ENCODE measurements at regions of chr3 and their contacts with region 1.

Region 1: DNA sequence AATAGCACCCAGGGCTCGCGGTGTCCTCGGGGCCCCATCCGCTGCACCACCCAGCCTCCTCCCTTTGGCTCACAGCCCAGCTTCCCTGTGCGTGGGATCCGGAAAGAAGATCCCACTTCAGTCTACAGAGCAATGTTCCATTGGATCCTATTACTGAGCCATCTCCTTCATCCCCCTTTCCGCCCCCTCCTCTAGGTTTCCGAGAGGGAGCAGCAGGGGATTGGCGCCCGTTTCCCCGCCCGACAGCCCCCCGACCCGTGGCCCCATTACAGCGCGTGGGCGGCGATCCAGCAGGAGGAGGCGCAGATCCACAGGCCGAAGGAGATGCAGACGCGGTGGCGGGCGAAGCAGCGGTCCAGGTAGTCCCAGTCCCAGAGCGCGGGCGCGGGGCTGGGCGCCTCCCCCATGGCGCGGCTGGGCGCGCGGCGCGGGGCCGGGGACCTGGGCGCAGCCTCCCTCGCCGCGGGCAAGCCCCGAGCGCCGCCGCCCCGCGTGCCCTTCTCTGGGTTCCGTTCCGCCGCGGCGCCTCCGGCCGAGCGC is 340 bp downstream of the TMEM44 start:
- DNase-seq: no peak
- H3K4me3 ChIP-seq: peak overlapping the region; percentile 68
- H3K27ac ChIP-seq: peak overlapping the region; percentile 52
- H3K27me3 ChIP-seq: no peaks in the 10 kb centered on the region
- CTCF ChIP-seq: no peak

Region 2: DNA sequence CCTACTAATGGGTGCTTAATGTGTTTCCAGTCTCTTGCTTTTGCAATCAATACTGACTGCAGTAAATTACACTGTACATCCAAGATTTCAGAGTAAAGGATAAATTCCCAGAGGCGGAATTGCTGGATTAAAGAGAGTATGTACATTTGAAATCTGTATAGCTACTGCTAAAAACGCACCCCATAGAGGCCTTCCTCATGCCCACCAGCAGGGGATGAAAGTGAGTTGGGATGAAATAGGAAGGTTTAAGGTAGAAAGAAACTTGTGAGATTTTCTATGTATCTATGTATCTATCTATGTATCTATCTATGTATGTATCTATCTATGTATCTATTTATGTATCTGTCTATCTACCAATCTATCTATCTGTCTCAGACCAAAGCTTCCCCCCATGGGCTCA is 28.0 kb before region 1 on chr3:
- CTCF ChIA-PET with region 1: interaction called, 10 read pairs
- POLR2A ChIA-PET with region 1: no interaction called
- DNase-seq: no peak
- H3K4me3 ChIP-seq: no peak overlapping the region
- H3K27ac ChIP-seq: no peak overlapping the region
- H3K27me3 ChIP-seq: no peaks in the 10 kb centered on the region
- CTCF ChIP-seq: peak; percentile 48

Region 3: DNA sequence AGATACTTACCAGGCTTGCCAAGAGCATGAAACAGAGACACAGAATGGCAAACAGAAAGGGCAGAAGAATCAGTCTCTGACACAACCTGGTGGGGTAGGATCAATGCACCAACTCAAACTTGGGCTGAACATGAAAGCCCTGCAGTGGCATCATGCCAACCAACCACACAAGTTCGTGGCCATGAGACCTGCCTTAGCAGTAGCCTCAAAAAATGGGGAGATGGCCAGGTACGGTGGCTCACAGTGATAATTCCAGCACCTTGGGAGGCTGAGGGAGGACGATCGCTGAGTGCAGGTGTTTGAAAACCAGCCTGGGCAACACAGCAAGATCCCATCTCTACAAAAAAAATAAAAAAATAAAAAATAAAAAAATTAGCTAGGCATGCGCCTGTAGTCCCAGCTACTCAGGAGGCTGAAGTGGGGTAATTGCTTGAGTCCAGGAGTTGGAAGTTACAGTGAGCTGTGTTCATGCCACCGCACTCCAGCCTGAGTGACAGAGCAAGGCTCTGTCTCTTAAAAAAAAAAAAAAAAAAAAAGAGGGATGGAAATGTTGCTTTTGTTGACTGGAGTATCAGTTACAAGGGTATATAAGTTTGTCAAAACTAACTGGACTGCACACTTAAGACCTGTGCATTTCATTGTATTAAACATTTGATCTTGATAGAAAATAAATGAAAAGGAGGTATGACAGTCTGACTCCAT is 544.7 kb after region 1 on chr3:
- CTCF ChIA-PET with region 1: interaction called, 10 read pairs
- POLR2A ChIA-PET with region 1: no interaction called
- DNase-seq: no peak
- H3K4me3 ChIP-seq: no peak overlapping the region
- H3K27ac ChIP-seq: no peak overlapping the region
- H3K27me3 ChIP-seq: no peaks in the 10 kb centered on the region
- CTCF ChIP-seq: no peak